ENCODE measurements at regions of chr10 and their contacts with region 1.

Region 1: DNA sequence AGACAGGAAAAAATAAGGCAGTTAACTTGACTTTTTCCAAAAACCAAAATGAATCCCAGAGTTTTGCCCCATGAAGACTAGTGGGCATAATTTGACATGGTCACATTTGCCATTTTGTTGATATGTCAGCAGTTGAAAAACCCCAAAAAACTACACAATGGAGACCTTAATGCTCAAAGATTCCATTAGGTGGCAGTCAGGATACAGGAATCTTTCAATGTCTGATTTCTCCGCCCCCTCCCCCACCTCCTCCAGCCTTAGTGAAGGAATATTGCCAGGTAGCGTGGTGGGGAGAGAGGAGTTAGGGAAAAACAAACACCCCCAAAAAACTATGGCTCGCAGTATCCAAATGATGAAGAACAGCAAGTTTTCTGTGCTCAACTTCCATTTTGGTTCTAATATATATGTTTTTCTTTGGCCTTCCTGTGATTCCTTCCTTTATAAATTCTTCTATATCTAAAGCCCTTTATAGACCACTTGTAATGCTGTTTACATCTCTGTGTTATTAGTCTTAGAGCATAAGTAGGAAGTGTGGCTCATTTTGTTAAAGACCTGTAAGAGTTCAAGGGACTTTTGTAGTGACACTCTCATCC is 6.7 kb upstream of the SMNDC1 start:
- DNase-seq: no peak
- ATAC-seq: peak; percentile 87
- H3K4me3 ChIP-seq: no peak overlapping the region
- H3K27ac ChIP-seq: no peak overlapping the region
- H3K4me1 ChIP-seq: no peaks in the 10 kb centered on the region
- H3K27me3 ChIP-seq: no peaks in the 10 kb centered on the region
- CTCF ChIP-seq: peak; percentile 65

Region 2: GRCh38 chr10:110547139-110547761 is 235.8 kb after region 1 on chr10:
- intact Hi-C with region 1: loop called (anchors 5 kb)
- DNase-seq: no peak
- ATAC-seq: peak; percentile 75
- H3K4me3 ChIP-seq: no peak overlapping the region
- H3K27ac ChIP-seq: no peak overlapping the region
- H3K4me1 ChIP-seq: peaks cover 16% of the 10 kb centered on the region
- H3K27me3 ChIP-seq: no peaks in the 10 kb centered on the region
- CTCF ChIP-seq: peak; percentile 86

Measured in upper lobe of right lung (tissue), 1 donor.